Right ventricle myocardium inferior (tissue), 1 donor: ENCODE measurements at regions of chr1 and their contacts with region 1.

Region 1: DNA sequence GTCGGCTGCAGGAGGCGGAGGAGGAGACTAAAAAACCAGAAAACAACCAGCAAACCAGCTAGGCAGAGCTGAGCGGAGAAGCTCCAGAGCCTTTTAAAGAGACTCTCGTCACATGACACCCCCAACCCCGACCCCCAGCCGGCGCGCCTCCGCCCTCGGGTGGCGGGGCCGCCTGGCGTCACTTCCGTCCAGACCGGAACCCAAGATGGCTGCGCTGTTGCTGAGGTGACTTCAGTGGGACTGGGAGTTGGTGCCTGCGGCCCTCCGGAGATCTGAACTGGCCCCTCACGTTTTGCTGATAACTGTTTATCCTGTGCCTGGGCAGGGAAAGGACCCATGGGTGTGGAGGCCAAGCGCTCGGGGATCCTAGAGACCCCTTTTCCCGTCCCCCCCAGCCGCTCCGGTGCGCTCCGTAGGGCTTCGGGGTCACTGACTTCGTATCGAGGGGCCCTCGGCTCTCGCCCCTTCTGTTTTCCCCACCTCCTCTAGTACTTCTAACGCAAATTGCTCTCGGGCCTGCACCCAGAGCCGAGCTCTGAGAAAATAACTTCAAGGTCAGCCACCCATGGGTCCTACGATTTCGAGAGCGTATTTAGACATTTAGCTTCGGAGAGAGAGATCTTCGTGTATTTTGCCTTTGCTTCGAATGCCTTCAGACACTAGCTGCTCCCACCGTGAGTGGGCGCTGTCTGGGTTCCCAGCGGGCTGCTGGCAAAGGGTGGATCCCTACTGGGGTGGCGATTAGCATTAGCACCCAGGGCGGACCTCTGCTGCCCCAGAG is at the start of gene SDHC:
- DNase-seq: peak; percentile 95
- ATAC-seq: peak; percentile 99
- total RNA-seq, gene SDHC: 407 TPM

Region 2: DNA sequence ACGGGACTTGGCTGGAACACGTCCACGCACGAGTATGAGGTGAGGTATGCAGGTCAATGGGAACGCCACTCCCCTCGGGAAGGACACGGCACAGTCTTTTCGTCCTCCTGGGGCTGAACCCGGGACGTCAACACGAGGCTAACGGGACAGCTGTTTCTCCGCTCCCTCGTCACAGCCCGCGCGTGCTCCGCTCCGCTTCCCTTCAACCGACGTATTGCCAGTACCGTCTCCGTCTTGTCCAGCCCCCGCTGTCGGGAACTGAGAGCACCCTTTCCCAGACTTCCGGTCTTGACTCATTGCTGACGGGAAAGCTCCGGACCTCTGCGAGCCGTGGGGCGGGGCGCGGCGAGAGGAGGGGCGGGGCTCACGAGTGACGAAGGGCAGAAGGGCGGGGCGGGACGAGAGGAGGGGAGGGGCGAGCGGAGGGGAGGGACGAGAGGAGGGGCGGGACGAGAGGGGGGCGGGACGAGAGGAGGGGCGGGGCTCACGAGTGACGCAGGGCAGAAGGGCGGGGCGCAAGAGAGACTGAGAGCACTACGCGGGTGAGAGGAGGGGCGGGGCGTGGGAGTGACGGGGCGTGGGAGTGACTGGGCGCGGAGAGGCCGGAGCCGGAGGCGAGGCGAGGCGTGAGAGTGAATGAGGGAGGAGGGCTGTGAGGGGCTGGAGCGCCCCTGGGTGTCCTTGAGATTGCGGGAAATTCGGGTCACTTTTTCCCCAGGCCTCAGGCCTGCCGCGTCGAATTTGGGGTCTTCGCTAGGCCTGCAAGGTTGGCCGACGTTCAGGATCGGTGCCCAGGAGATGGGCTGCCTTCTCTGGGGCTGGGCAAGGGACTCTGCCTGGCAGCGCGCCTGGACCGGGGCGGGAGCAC is 75.5 kb after region 1 on chr1:
- intact Hi-C with region 1: loop called (anchors 5 kb)
- DNase-seq: peak; percentile 99
- ATAC-seq: peak; percentile 96

Region 3: DNA sequence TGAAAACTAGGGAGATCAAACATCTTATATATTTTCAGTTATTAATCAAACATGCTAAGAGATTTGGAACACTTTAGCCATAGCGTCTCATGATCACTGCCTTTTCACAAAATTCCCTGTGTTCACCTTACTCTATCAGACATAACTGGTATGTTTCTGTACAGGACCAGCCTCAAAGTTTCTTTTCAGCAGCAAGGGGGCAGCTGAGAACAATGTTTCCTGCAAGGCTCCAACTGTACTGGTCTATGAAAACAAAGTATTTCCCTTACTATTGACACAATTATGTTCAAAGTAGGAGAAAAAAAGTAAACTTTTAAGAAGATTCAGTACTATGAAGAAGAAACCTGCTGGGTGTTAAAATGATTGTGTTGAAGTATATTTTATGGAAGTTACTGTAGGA is 550.2 kb after region 1 on chr1:
- intact Hi-C with region 1: no loop called
- DNase-seq: no peak
- ATAC-seq: no peak